Endothelial cell of umbilical vein (primary cell): ENCODE measurements at regions of chr6 and their contacts with region 1.

Region 1: DNA sequence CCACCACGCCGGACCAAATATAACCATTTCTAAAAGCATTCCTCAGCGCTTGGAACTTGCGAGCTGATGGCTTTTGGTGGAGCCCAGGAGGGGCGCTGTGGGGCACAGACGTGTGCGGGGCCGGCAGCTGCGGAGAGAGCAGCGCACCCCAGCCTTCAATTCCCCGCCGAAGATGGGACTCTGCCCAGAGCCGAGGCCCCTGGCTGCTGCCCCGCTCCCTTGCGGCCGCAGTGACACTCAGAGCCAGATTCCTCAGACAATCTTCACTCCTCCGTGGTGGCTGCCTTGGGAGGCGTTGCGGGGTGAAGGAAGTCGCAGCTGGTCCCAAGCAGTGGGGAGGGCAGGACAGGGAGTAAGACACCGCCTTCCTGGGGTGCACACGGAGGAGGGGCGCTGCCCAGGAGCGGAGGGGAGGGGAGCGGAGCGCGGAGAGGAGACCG is 87.7 kb downstream of the TMEM242 start:
- DNase-seq: peak; percentile 55
- H3K4me3 ChIP-seq: peak overlapping the region; percentile 20 to 46 (median 28)
- H3K27ac ChIP-seq: no peak overlapping the region
- H3K4me1 ChIP-seq: peaks cover 8% of the 10 kb centered on the region
- H3K27me3 ChIP-seq: peaks cover 33% of the 10 kb centered on the region in 2 experiments
- CTCF ChIP-seq: peak; percentile 54 to 78
- POLR2A ChIP-seq: no peak

Region 2: DNA sequence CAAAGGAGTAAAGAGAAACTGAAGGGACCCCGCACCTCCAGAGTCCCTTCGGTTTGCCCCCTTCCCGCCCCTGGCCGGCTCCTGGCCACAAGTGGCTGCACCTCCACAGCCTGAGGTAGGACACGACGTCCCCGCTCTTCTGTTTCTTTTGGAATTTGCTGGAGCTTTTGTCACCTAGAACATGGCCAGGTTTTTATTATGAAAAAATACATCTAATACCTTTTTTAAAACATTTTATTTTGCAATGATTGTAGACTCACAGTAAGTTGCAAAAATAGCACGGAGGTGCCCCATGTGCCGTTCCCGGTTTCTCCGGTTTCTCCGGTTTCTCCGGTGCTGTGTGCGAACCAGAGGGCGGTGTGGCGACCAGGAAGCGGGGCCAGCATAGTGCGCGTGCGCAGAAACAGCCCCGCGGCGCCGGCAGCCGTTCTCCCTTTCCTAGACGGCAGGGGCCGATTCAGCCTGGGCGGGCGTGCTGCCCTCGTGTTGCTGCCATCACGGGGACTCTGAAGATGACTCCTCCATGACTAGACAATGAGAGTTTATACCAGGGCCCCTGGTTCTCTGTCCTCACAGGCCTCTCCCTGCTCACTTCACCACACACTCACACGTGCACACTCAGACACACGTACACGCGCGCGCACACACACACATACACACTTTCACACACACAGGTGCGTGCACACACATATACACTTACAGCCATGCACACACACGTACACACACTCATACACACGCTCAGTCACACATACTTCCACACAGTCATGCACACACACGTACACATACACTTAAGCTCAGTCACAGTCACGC is 14.4 kb before region 1 on chr6:
- CTCF ChIA-PET with region 1: interaction called, 16 read pairs
- POLR2A ChIA-PET with region 1: no interaction called
- dilution Hi-C with region 1: no loop called
- intact Hi-C with region 1: no loop called
- DNase-seq: peak; percentile 77
- H3K4me3 ChIP-seq: peak overlapping the region; percentile 1 to 34 (median 18)
- H3K27ac ChIP-seq: no peak overlapping the region
- H3K4me1 ChIP-seq: peaks cover 14% of the 10 kb centered on the region
- H3K27me3 ChIP-seq: no peaks in the 10 kb centered on the region
- CTCF ChIP-seq: peak in 1 of 2 donors; percentile 26
- POLR2A ChIP-seq: peak; percentile 66